Activated CD4-positive, alpha-beta T cell treated with anti-CD3 and anti-CD28 coated beads for 36 hours (primary cell): ENCODE measurements at regions of chr14 and their contacts with region 1.

Region 1: GRCh38 chr14:92651106-92651757 is 97.2 kb downstream of the LGMN start:
- DNase-seq: peak; percentile 90
- ATAC-seq: peak; percentile 82
- H3K4me3 Mint-ChIP-seq: peak overlapping the region; percentile 90
- H3K27ac Mint-ChIP-seq: peak overlapping the region; percentile 96
- H3K4me1 Mint-ChIP-seq: peaks cover 75% of the 10 kb centered on the region
- H3K27me3 Mint-ChIP-seq: no peaks in the 10 kb centered on the region

Region 2: GRCh38 chr14:92039719-92040430 is 611.4 kb before region 1 on chr14 and contains the start of gene TRIP11:
- CTCF ChIA-PET with region 1: no interaction called
- POLR2A ChIA-PET with region 1: no interaction called
- intact Hi-C with region 1: loop called in 1 of 2 experiments (anchors 5 kb)
- DNase-seq: peak; percentile 98
- ATAC-seq: peak; percentile 95
- H3K4me3 Mint-ChIP-seq: peak within 1 kb of the TSS; percentile 92
- H3K27ac Mint-ChIP-seq: peak within 1 kb of the TSS; percentile 98
- H3K4me1 Mint-ChIP-seq: peaks cover 42% of the 10 kb centered on the region
- H3K27me3 Mint-ChIP-seq: no peaks in the 10 kb centered on the region
- total RNA-seq, gene TRIP11: 35.7 to 41.0 TPM

Region 3: DNA sequence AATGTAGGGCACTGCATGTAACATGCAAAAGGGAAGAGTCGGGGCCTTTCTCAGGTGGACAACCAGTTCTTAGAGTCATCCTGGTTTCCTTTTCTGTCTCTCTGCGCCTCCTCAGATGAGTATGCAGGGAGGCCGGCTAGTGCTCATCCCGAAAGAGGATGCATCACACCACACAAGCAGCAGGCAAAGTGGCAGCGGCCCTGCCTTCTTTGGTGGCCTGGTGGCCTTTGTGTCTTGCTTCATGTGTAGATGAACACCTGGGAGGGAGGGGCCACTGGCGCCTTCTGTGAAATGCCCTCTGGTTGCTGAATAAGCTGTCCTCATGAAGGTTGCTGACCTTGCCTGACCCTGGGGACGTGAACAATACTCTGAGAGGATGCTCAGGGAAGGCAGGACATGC is 310.3 kb before region 1 on chr14:
- CTCF ChIA-PET with region 1: no interaction called
- POLR2A ChIA-PET with region 1: no interaction called
- intact Hi-C with region 1: loop called in 1 of 2 experiments (anchors 1 kb)
- DNase-seq: peak; percentile 71
- ATAC-seq: peak; percentile 66
- H3K4me3 Mint-ChIP-seq: no peak overlapping the region
- H3K27ac Mint-ChIP-seq: peak overlapping the region; percentile 40
- H3K4me1 Mint-ChIP-seq: peaks cover 30% of the 10 kb centered on the region
- H3K27me3 Mint-ChIP-seq: peaks cover 34% of the 10 kb centered on the region

Region 4: GRCh38 chr14:92563359-92563758 is 87.9 kb before region 1 on chr14:
- CTCF ChIA-PET with region 1: no interaction called
- POLR2A ChIA-PET with region 1: no interaction called
- intact Hi-C with region 1: loop called (anchors 1 to 10 kb)
- DNase-seq: peak; percentile 41
- ATAC-seq: peak; percentile 87
- H3K4me3 Mint-ChIP-seq: no peak overlapping the region
- H3K27ac Mint-ChIP-seq: no peak overlapping the region
- H3K4me1 Mint-ChIP-seq: peaks cover 34% of the 10 kb centered on the region
- H3K27me3 Mint-ChIP-seq: no peaks in the 10 kb centered on the region

Region 5: GRCh38 chr14:92612988-92613658 is 38.1 kb before region 1 on chr14:
- CTCF ChIA-PET with region 1: interaction called, 12 read pairs
- POLR2A ChIA-PET with region 1: no interaction called
- intact Hi-C with region 1: loop called (anchors 2 to 5 kb)
- DNase-seq: peak; percentile 82
- ATAC-seq: peak; percentile 60
- H3K4me3 Mint-ChIP-seq: no peak overlapping the region
- H3K27ac Mint-ChIP-seq: no peak overlapping the region
- H3K4me1 Mint-ChIP-seq: peaks cover 47% of the 10 kb centered on the region
- H3K27me3 Mint-ChIP-seq: no peaks in the 10 kb centered on the region